H1 (cell line): ENCODE measurements at regions of chr10 and their contacts with region 1.

Region 1: DNA sequence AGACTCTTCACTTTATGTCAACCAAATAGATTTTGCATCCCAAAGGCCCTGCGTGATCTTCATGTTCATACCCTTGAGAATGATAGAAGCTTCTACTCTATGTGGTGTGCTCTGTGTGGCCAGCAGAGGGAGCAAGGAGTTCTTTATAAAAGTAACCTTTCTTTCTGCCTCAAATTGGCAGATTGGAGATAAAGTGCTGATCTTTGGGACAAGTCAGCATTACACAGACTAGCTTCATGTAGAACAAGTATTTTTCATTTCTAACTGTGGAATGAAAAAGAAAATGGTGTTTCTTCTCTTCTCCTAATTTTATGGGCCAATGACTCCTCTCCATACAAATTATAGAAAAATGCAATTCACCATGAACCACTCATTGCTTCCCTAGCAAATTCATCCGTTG is 1214.1 kb downstream of the SORCS1 start:
- DNase-seq: peak in 1 of 2 experiments; percentile 54
- H3K4me3 ChIP-seq: no peak overlapping the region
- H3K27ac ChIP-seq: no peak overlapping the region
- H3K4me1 ChIP-seq: peaks cover 0 to 3% (median 1%) of the 10 kb centered on the region in 4 experiments; a peak in 2 of 7 replicates
- H3K27me3 ChIP-seq: peaks cover 0 to 1% (median 0%) of the 10 kb centered on the region in 4 experiments; a peak in 1 of 7 replicates
- CTCF ChIP-seq: peak in 2 of 3 experiments; percentile 67 to 69; a peak in 3 of 4 replicates
- EP300 ChIP-seq: no peak
- POLR2A ChIP-seq: no peak
- RAD21 ChIP-seq: peak; percentile 77 to 82

Region 2: GRCh38 chr10:106175760-106176377 is 225.5 kb after region 1 on chr10:
- CTCF ChIA-PET with region 1: interaction called, 13 read pairs
- POLR2A ChIA-PET with region 1: no interaction called
- DNase-seq: no peak
- H3K4me3 ChIP-seq: no peak overlapping the region
- H3K27ac ChIP-seq: no peak overlapping the region
- H3K4me1 ChIP-seq: no peaks in the 10 kb centered on the region
- H3K27me3 ChIP-seq: no peaks in the 10 kb centered on the region
- CTCF ChIP-seq: peak in 2 of 3 experiments; percentile 16 to 46; a peak in 2 of 4 replicates
- EP300 ChIP-seq: no peak
- POLR2A ChIP-seq: no peak
- RAD21 ChIP-seq: peak in 1 of 2 experiments; percentile 67

Region 3: GRCh38 chr10:106189292-106189691 is 238.9 kb after region 1 on chr10:
- CTCF ChIA-PET with region 1: interaction called, 13 read pairs
- POLR2A ChIA-PET with region 1: interaction called, 5 read pairs
- DNase-seq: peak; percentile 9 to 53
- H3K4me3 ChIP-seq: no peak overlapping the region
- H3K27ac ChIP-seq: no peak overlapping the region
- H3K4me1 ChIP-seq: no peaks in the 10 kb centered on the region
- H3K27me3 ChIP-seq: no peaks in the 10 kb centered on the region
- CTCF ChIP-seq: peak; percentile 30 to 85 (median 70)
- EP300 ChIP-seq: no peak
- POLR2A ChIP-seq: no peak
- RAD21 ChIP-seq: peak; percentile 78 to 80